ENCODE measurements at regions of chr1 and their contacts with region 1.

Region 1: GRCh38 chr1:10779201-10779600 is 17.2 kb downstream of the CASZ1 start:
- DNase-seq: peak; percentile 90
- H3K4me3 Mint-ChIP-seq: no peak overlapping the region
- H3K27ac Mint-ChIP-seq: peak overlapping the region; percentile 45
- H3K4me1 Mint-ChIP-seq: peaks cover 8% of the 10 kb centered on the region
- H3K27me3 Mint-ChIP-seq: no peaks in the 10 kb centered on the region
- CTCF ChIP-seq: no peak

Region 2: DNA sequence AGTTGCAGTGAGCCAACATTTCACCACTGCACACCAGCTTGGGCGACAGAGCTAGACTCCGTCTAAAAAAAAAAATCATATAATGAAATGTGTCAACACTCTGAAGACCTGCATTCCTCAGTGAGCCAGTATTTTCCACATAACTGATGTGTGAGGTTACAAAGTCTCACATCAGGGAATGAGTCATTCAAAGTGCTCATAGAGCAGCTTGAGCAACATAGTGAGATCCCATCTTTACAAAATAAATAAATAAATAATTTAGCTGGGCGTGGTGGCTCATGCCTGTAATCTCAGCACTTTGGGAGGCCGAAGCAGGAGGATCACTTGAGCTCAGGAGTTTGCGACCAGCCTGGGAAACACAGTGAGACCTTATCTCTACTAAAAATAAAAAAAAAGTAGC is 48.2 kb before region 1 on chr1:
- CTCF ChIA-PET with region 1: interaction called, 7 read pairs
- intact Hi-C with region 1: loop called (anchors 5 kb)
- DNase-seq: peak; percentile 10
- H3K4me3 Mint-ChIP-seq: no peak overlapping the region
- H3K27ac Mint-ChIP-seq: no peak overlapping the region
- H3K4me1 Mint-ChIP-seq: peaks cover 9% of the 10 kb centered on the region
- H3K27me3 Mint-ChIP-seq: no peaks in the 10 kb centered on the region
- CTCF ChIP-seq: no peak

Region 3: GRCh38 chr1:10761503-10762152 is 17.6 kb before region 1 on chr1:
- CTCF ChIA-PET with region 1: interaction called, 5 read pairs
- intact Hi-C with region 1: loop called (anchors 2 kb)
- DNase-seq: peak; percentile 60
- H3K4me3 Mint-ChIP-seq: peak overlapping the region; percentile 44
- H3K27ac Mint-ChIP-seq: peak overlapping the region; percentile 63
- H3K4me1 Mint-ChIP-seq: peaks cover 34% of the 10 kb centered on the region
- H3K27me3 Mint-ChIP-seq: no peaks in the 10 kb centered on the region
- CTCF ChIP-seq: no peak

Measured in Calu3 (cell line).